Activated CD8-positive, alpha-beta T cell treated with anti-CD3 and anti-CD28 coated beads for 36 hours (primary cell): ENCODE measurements at regions of chr9 and their contacts with region 1.

Region 1: GRCh38 chr9:88110026-88110425 is 28.2 kb downstream of the SPATA31C2 start:
- DNase-seq: no peak
- ATAC-seq: no peak
- H3K4me3 Mint-ChIP-seq: no peak overlapping the region
- H3K27ac Mint-ChIP-seq: no peak overlapping the region
- H3K4me1 Mint-ChIP-seq: peaks cover 3% of the 10 kb centered on the region
- H3K27me3 Mint-ChIP-seq: peaks cover 16% of the 10 kb centered on the region
- CTCF ChIP-seq: no peak

Region 2: GRCh38 chr9:87944096-87944495 is 165.9 kb before region 1 on chr9:
- CTCF ChIA-PET with region 1: no interaction called
- POLR2A ChIA-PET with region 1: no interaction called
- intact Hi-C with region 1: loop called (anchors 5 kb)
- DNase-seq: no peak
- ATAC-seq: no peak
- H3K4me3 Mint-ChIP-seq: no peak overlapping the region
- H3K27ac Mint-ChIP-seq: no peak overlapping the region
- H3K4me1 Mint-ChIP-seq: peaks cover 5% of the 10 kb centered on the region
- H3K27me3 Mint-ChIP-seq: peaks cover 27% of the 10 kb centered on the region
- CTCF ChIP-seq: no peak

Region 3: DNA sequence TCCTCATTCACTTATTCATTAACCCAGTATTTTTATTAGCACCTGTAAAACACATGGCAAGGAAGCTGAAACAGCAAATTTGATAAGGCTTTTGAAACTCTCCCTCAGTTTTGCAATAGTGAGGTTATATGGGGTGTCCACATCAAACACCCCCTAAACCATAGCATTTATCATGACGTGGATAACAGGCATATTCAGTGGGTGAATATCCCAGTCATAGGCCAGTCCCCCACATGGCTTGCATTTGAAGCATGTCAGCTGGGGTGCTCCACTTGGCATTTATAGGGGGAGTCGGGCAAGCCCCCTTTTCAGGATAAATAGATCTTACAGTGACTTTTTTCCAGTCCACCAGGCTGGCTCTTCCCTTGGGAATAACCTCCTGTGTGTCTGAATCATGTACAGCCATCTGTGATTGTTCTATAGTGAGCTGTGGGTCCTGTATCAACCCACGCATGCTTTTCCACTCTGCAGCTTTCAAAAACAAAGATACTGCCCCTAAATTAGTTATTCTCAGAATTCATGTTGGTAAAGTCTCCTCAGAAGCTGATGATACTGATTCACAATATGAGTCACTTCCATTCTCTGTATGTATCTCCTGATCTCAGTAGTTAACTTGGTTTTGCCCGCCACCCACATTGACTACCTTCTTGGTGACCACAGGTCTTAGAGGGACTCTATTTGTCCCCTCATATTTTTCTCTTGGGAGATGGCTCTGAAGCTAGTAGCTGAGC is 193.9 kb after region 1 on chr9:
- CTCF ChIA-PET with region 1: no interaction called
- POLR2A ChIA-PET with region 1: no interaction called
- intact Hi-C with region 1: no loop called
- DNase-seq: peak; percentile 91
- ATAC-seq: peak; percentile 88
- H3K4me3 Mint-ChIP-seq: peak overlapping the region; percentile 30
- H3K27ac Mint-ChIP-seq: peak overlapping the region; percentile 88
- H3K4me1 Mint-ChIP-seq: peaks cover 39% of the 10 kb centered on the region
- H3K27me3 Mint-ChIP-seq: peaks cover 2% of the 10 kb centered on the region
- CTCF ChIP-seq: no peak

Region 4: DNA sequence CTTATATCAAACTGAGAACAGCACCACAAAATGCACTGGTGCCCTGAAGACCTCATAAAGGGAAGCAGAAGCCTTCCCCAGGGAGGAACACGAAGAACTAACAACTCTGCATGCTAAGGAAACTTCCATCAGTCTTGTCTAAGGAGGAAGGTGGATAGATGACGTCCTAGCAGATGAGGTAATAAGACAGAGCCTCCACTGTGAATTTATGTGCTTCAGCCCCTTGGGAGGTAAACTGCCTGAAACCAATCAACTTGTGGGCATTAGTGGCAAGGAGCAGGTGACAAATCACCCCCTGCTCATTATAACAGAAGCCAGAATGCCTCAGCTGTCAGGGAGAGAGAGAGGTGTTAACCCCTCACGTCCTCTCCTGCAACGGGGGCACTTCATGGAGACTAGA is 229.3 kb after region 1 on chr9:
- CTCF ChIA-PET with region 1: no interaction called
- POLR2A ChIA-PET with region 1: no interaction called
- intact Hi-C with region 1: no loop called
- DNase-seq: no peak
- ATAC-seq: no peak
- H3K4me3 Mint-ChIP-seq: no peak overlapping the region
- H3K27ac Mint-ChIP-seq: no peak overlapping the region
- H3K4me1 Mint-ChIP-seq: no peaks in the 10 kb centered on the region
- H3K27me3 Mint-ChIP-seq: peaks cover 3% of the 10 kb centered on the region
- CTCF ChIP-seq: no peak